Uterus (tissue), 4 donors: ENCODE measurements at regions of chr14 and their contacts with region 1.

Region 1: GRCh38 chr14:91177073-91178034 is 63.5 kb downstream of the DGLUCY start:
- DNase-seq: peak; percentile 46 to 48
- H3K4me3 ChIP-seq: no peak overlapping the region
- H3K27ac ChIP-seq: peak overlapping the region in 1 of 2 donors; percentile 56
- H3K4me1 ChIP-seq: no peaks in the 10 kb centered on the region
- H3K27me3 ChIP-seq: no peaks in the 10 kb centered on the region
- CTCF ChIP-seq: peak; percentile 60 to 79 (median 65)
- POLR2A ChIP-seq: no peak

Region 2: GRCh38 chr14:90785471-90785870 is 391.9 kb before region 1 on chr14:
- intact Hi-C with region 1: no loop called
- DNase-seq: peak; percentile 60 to 64
- H3K4me3 ChIP-seq: no peak overlapping the region
- H3K27ac ChIP-seq: no peak overlapping the region
- H3K4me1 ChIP-seq: no peaks in the 10 kb centered on the region
- H3K27me3 ChIP-seq: no peaks in the 10 kb centered on the region
- CTCF ChIP-seq: no peak
- POLR2A ChIP-seq: no peak

Region 3: GRCh38 chr14:90903101-90903500 is 274.3 kb before region 1 on chr14:
- intact Hi-C with region 1: loop called (anchors 5 kb)
- DNase-seq: peak; percentile 47 to 66
- H3K4me3 ChIP-seq: no peak overlapping the region
- H3K27ac ChIP-seq: no peak overlapping the region
- H3K4me1 ChIP-seq: no peaks in the 10 kb centered on the region
- H3K27me3 ChIP-seq: no peaks in the 10 kb centered on the region
- CTCF ChIP-seq: peak; percentile 59 to 81 (median 68)
- POLR2A ChIP-seq: no peak

Region 4: GRCh38 chr14:91060351-91061055 is 116.9 kb before region 1 on chr14 and contains the start of gene RPS6KA5:
- intact Hi-C with region 1: loop called (anchors 10 kb)
- DNase-seq: peak; percentile 100
- H3K4me3 ChIP-seq: peak within 1 kb of the TSS; percentile 97
- H3K27ac ChIP-seq: peak within 1 kb of the TSS; percentile 99
- H3K4me1 ChIP-seq: peaks cover 0 to 5% of the 10 kb centered on the region in 2 donors
- H3K27me3 ChIP-seq: no peaks in the 10 kb centered on the region
- CTCF ChIP-seq: peak in 3 of 4 experiments; percentile 17 to 57 (median 24)
- POLR2A ChIP-seq: peak; percentile 92 to 93
- total RNA-seq, gene RPS6KA5: 3.8 to 20.0 (median 14.8) TPM

Region 5: GRCh38 chr14:91286530-91286937 is 109.2 kb after region 1 on chr14:
- intact Hi-C with region 1: loop called (anchors 5 kb)
- DNase-seq: peak; percentile 74
- H3K4me3 ChIP-seq: no peak overlapping the region
- H3K27ac ChIP-seq: no peak overlapping the region
- H3K4me1 ChIP-seq: peaks cover 0 to 5% of the 10 kb centered on the region in 2 donors
- H3K27me3 ChIP-seq: no peaks in the 10 kb centered on the region
- CTCF ChIP-seq: peak; percentile 83 to 92 (median 87)
- POLR2A ChIP-seq: no peak